Activated CD8-positive, alpha-beta T cell treated with anti-CD3 and anti-CD28 coated beads for 36 hours (primary cell): ENCODE measurements at regions of chr12 and their contacts with region 1.

Region 1: GRCh38 chr12:69570545-69571399 is 14.5 kb upstream of the CCT2 start:
- DNase-seq: peak; percentile 73
- ATAC-seq: peak; percentile 83
- H3K4me3 Mint-ChIP-seq: no peak overlapping the region
- H3K27ac Mint-ChIP-seq: no peak overlapping the region
- H3K4me1 Mint-ChIP-seq: no peaks in the 10 kb centered on the region
- H3K27me3 Mint-ChIP-seq: no peaks in the 10 kb centered on the region
- CTCF ChIP-seq: peak; percentile 91

Region 2: GRCh38 chr12:69359531-69360347 is 211.0 kb before region 1 on chr12 and contains the start of gene YEATS4:
- CTCF ChIA-PET with region 1: interaction called, 81 read pairs
- POLR2A ChIA-PET with region 1: interaction called, 4 read pairs
- intact Hi-C with region 1: loop called (anchors 2 kb)
- DNase-seq: peak; percentile 95
- ATAC-seq: peak; percentile 82
- H3K4me3 Mint-ChIP-seq: peak within 1 kb of the TSS; percentile 77
- H3K27ac Mint-ChIP-seq: peak within 1 kb of the TSS; percentile 96
- H3K4me1 Mint-ChIP-seq: peaks cover 23% of the 10 kb centered on the region
- H3K27me3 Mint-ChIP-seq: peaks cover under 1% of the 10 kb centered on the region
- CTCF ChIP-seq: no peak
- total RNA-seq, gene YEATS4: 54.0 to 60.9 TPM

Region 3: GRCh38 chr12:69470189-69471075 is 100.3 kb before region 1 on chr12 and contains the start of gene FRS2:
- CTCF ChIA-PET with region 1: interaction called, 21 read pairs
- POLR2A ChIA-PET with region 1: interaction called, 3 read pairs
- intact Hi-C with region 1: no loop called
- DNase-seq: peak; percentile 93
- ATAC-seq: peak; percentile 99
- H3K4me3 Mint-ChIP-seq: peak within 1 kb of the TSS; percentile 96
- H3K27ac Mint-ChIP-seq: peak within 1 kb of the TSS; percentile 98
- H3K4me1 Mint-ChIP-seq: peaks cover 38% of the 10 kb centered on the region
- H3K27me3 Mint-ChIP-seq: no peaks in the 10 kb centered on the region
- CTCF ChIP-seq: no peak
- total RNA-seq, gene FRS2: 8.3 to 10.5 TPM

Region 4: DNA sequence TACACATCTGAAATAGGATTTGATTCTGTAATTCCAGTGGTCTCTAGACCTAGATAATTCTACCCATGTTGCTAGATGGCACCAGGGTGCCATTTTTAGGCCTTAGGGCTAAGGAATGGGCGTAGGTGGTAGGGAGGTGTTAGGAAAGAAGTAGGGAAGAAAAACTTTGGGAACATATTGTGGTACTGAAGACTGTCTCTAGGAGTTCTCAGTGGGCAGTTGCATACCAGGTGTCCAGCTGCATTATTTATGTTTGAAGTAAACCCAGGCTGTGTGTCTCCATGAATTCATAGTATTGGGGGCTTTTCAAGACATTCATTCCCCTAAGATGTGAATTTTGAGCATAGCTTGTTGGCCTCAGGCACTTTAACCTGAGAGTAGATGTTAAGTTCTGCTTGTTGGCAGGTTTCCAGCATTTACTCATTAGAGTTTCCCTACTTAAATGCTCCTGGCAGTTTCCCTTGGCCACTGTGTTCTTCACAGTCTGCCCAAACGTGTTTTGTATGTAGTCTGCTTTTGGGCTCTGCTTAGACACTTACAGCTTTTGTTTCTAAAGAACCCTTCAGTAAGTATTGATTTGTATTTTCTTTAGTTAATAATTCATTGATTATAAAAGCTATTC is 17.0 kb before region 1 on chr12:
- CTCF ChIA-PET with region 1: interaction called, 22 read pairs
- POLR2A ChIA-PET with region 1: no interaction called
- intact Hi-C with region 1: no loop called
- DNase-seq: no peak
- ATAC-seq: no peak
- H3K4me3 Mint-ChIP-seq: no peak overlapping the region
- H3K27ac Mint-ChIP-seq: no peak overlapping the region
- H3K4me1 Mint-ChIP-seq: peaks cover 3% of the 10 kb centered on the region
- H3K27me3 Mint-ChIP-seq: no peaks in the 10 kb centered on the region
- CTCF ChIP-seq: no peak

Region 5: GRCh38 chr12:69639400-69640016 is 68.7 kb after region 1 on chr12:
- CTCF ChIA-PET with region 1: interaction called, 10 read pairs
- POLR2A ChIA-PET with region 1: interaction called, 3 read pairs
- intact Hi-C with region 1: no loop called
- DNase-seq: peak; percentile 70
- ATAC-seq: peak; percentile 98
- H3K4me3 Mint-ChIP-seq: no peak overlapping the region
- H3K27ac Mint-ChIP-seq: no peak overlapping the region
- H3K4me1 Mint-ChIP-seq: no peaks in the 10 kb centered on the region
- H3K27me3 Mint-ChIP-seq: no peaks in the 10 kb centered on the region
- CTCF ChIP-seq: peak; percentile 76